ENCODE measurements at regions of chr11 and their contacts with region 1.

Region 1: DNA sequence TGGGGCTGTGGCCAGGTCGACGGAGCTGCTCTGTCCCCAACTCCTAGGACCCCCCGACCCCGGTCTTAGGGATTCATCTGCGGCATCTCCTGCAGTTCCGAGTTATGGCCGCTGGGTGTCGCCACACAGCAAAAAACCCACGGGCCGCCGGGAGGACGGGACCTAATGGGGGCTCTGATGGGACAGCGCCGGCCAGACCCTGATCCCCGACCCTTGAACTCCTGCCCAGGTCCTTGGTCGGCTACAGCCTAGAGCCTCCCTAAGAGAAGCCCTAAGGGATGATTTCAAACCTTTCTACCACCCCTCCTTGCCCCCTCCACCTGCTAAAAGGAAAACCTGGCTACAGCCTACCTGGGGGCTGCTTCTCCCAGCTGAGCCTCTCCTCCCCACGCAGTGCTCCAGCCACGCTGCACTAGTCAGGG is 30.8 kb upstream of the LRRC10B start:
- DNase-seq: peak; percentile 59 to 70 (median 66)
- ATAC-seq: peak; percentile 39
- H3K4me3 ChIP-seq: no peak overlapping the region
- H3K4me1 ChIP-seq: no peaks in the 10 kb centered on the region
- CTCF ChIP-seq: peak; percentile 82

Region 2: GRCh38 chr11:61516675-61517572 is 39.2 kb after region 1 on chr11:
- intact Hi-C with region 1: loop called (anchors 5 kb)
- DNase-seq: peak in 2 of 3 donors; percentile 57 to 60
- ATAC-seq: no peak
- H3K4me3 ChIP-seq: no peak overlapping the region
- H3K4me1 ChIP-seq: peaks cover 5% of the 10 kb centered on the region
- CTCF ChIP-seq: peak; percentile 88

Measured in mucosa of descending colon (tissue), 3 donors.